Vagina (tissue), 2 donors: ENCODE measurements at regions of chr17 and their contacts with region 1.

Region 1: GRCh38 chr17:64025732-64026294 is 5.4 kb upstream of the ICAM2 start:
- DNase-seq: peak in 1 of 2 donors; percentile 84
- H3K4me3 ChIP-seq: peak overlapping the region in 1 of 2 donors; percentile 0
- H3K27ac ChIP-seq: no peak overlapping the region
- H3K4me1 ChIP-seq: peaks cover 10% of the 10 kb centered on the region
- H3K27me3 ChIP-seq: no peaks in the 10 kb centered on the region
- CTCF ChIP-seq: peak; percentile 83 to 97 (median 90)
- POLR2A ChIP-seq: no peak

Region 2: GRCh38 chr17:63919311-63919723 is 106.5 kb before region 1 on chr17:
- intact Hi-C with region 1: loop called (anchors 10 kb)
- DNase-seq: no peak
- H3K4me3 ChIP-seq: no peak overlapping the region
- H3K27ac ChIP-seq: no peak overlapping the region
- H3K4me1 ChIP-seq: no peaks in the 10 kb centered on the region
- H3K27me3 ChIP-seq: no peaks in the 10 kb centered on the region
- CTCF ChIP-seq: peak; percentile 92 to 95 (median 93)
- POLR2A ChIP-seq: no peak